ENCODE measurements at regions of chr2 and their contacts with region 1.

Region 1: GRCh38 chr2:173884025-173884802 is 81.0 kb downstream of the SP3 start:
- DNase-seq: no peak
- H3K4me3 ChIP-seq: no peak overlapping the region
- H3K27me3 ChIP-seq: peaks cover 2% of the 10 kb centered on the region; the same call in 1 of the 2 replicates
- CTCF ChIP-seq: peak; percentile 74

Region 2: GRCh38 chr2:173249661-173250641 is 634.3 kb before region 1 on chr2:
- CTCF ChIA-PET with region 1: no interaction called
- POLR2A ChIA-PET with region 1: no interaction called
- DNase-seq: no peak
- H3K4me3 ChIP-seq: no peak overlapping the region
- H3K27me3 ChIP-seq: no peaks in the 10 kb centered on the region
- CTCF ChIP-seq: no peak

Region 3: GRCh38 chr2:173922760-173923159 is 38.5 kb after region 1 on chr2:
- CTCF ChIA-PET with region 1: no interaction called
- POLR2A ChIA-PET with region 1: no interaction called
- DNase-seq: no peak
- H3K4me3 ChIP-seq: no peak overlapping the region
- H3K27me3 ChIP-seq: no peaks in the 10 kb centered on the region
- CTCF ChIP-seq: no peak

Region 4: DNA sequence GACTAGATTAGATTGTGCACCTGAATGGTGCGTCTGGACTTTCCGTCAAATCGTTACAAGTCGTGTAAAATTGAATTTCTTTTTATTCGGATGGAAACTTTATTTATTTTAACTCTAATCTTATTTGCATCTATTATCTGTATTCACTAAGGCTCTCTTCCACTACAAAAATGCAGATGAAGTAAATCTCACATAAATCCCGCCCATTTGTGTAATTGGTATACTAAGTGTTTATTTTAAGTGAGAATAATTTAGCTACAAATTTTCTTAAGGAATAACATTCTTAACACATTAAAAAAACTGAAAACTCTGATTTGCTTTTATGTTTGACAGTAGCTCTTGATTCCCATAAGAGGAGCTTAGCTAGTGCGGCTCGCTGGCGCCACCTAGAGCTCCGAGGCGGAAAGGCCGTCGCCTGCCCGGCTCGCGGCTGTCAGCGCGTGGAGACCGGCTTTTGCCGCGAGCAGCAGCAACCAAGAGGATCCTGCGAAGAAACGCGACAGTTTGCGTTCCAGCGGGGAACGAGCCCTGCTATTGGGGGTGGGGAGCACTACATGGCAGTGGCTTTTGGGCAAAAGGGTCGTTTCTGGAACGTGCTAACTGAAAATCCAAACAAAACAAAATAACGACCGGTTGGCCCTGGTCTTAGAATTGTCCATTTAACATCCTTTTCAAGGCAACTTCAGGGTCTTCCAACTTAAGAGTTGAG is 457.2 kb after region 1 on chr2:
- CTCF ChIA-PET with region 1: interaction called, 12 read pairs
- POLR2A ChIA-PET with region 1: no interaction called
- DNase-seq: peak; percentile 31
- H3K4me3 ChIP-seq: no peak overlapping the region
- H3K27me3 ChIP-seq: peaks cover 51% of the 10 kb centered on the region
- CTCF ChIP-seq: peak; percentile 99